HEK293T (cell line): ENCODE measurements at regions of chr10 and their contacts with region 1.

Region 1: DNA sequence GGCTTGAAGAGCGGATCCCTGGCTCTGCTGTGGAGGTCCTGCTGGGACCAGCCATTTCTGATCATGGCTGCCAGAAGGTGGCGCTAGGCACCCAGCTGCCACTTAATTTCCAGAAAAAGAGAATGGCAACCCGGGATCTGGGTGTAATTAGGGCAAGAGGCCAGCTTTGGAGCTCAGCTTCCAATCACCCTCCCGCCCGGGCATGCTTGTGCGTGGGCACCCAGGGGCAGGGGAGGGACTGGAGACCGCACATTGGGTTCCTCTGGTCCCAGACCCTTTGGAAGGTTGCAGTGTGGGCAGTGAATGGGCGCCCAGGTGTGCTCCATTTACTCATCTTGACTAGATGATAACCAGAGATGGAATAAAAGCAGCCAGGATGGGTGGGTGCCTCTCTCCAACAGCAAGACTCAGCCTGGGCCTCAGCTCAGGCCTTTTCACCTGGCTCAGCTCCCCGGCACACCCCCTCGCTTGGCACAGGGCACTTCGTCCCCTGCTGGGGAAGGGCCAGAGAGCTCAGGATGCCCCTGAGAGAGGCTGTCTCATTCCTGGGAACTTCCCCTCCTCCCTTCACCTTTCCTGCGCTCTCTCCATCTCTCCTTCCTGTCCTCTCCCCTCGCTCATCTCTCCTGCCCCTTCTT is 14.7 kb downstream of the FAM241B start:
- DNase-seq: peak; percentile 81

Region 2: DNA sequence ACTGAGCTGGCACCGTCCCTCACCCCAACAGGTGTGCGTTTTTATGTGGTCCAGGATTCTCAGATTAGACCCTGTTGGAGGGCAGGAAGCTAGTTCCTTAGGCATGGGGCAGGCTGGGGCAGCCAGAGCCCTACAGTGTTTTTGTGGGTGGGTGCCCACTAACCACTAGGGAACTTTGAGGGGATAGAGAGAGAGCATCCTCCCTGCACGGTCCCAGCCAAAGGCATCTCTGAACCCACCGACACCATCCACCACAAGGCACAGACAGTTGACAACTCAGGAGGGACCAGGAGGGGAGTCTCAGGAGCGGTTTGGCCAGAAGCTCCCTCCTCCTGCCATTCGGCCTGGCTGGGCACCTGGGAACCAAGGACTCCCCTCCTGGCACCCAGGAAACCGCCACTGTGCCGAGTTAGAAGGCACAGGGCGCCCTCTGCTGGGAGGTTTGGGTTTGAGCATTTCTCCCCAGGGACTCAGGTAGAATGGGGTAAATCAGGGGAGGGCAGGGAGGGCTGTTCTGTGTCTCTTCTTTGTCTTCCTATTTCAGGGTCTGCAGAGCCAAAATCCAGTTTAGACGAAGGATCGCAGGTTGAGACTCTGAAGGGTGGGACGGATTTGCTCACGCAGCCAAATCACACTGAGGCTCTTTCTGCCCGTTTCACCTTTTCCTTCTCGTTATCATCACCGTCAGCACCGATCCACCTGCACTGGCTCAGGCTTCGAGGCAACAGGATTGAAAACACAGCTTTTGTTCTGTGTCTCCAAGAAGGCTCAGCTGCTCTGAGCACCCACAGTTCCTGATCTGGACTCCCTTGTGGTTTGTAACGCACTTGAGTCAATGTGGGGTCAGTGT is 72.2 kb after region 1 on chr10:
- CTCF ChIA-PET with region 1: interaction called, 32 read pairs
- POLR2A ChIA-PET with region 1: no interaction called
- DNase-seq: peak; percentile 78